ENCODE measurements at regions of chr7 and their contacts with region 1.

Region 1: GRCh38 chr7:103025341-103025740 is 49.3 kb downstream of the FBXL13 start:
- DNase-seq: peak in 2 of 4 experiments; percentile 58 to 68
- ATAC-seq: peak; percentile 88
- H3K4me3 ChIP-seq: no peak overlapping the region
- H3K27ac ChIP-seq: no peak overlapping the region; the same call in 2 of the 3 replicates
- H3K4me1 ChIP-seq: peaks cover 0 to 5% of the 10 kb centered on the region in 2 experiments; a peak in 2 of 5 replicates
- H3K27me3 ChIP-seq: no peaks in the 10 kb centered on the region
- CTCF ChIP-seq: no peak
- EP300 ChIP-seq: peak; percentile 85
- POLR2A ChIP-seq: no peak
- RAD21 ChIP-seq: 0 out of 4 replicates have a peak, but pooled peaks of 1 of the 2 experiments have one; percentile 19

Region 2: DNA sequence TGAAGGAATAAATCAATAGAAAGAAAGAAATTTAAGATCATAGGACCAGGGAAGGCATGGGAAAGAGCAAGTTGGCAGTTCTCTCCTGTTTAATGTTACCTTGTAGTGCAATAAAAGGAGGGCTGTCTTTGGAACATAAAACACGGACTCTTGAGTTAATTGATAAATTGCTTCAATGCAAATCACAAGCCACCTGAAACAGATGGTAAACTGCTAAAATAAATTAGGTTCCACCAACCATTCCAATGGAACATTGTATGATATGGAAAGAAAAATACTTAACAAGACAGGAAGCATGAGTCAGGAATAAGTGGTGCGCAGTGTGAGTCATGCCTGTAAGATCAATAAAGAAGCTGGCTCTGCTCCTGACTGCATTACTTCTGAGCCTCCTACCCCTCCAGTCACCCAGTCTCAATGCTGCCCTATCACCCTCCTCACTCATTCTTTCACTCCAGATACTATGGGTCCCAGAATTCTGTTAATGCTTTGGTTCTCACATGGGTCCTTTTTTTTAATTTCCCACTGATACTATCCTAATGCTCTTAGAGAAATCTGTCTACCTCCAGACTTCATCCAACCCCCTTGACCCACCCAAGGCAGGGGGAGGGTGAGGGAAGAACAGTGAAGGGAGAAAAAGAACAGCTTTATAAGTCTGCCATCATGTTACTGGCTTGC is 33.7 kb before region 1 on chr7:
- CTCF ChIA-PET with region 1: no interaction called
- POLR2A ChIA-PET with region 1: interaction called, 3 read pairs
- in situ Hi-C with region 1: no loop called
- intact Hi-C with region 1: loop called (anchors 5 kb)
- DNase-seq: peak; percentile 83 to 87 (median 84)
- ATAC-seq: peak; percentile 79
- H3K4me3 ChIP-seq: no peak overlapping the region
- H3K27ac ChIP-seq: peak overlapping the region; percentile 89
- H3K4me1 ChIP-seq: peaks cover 23 to 67% of the 10 kb centered on the region in 2 experiments
- H3K27me3 ChIP-seq: no peaks in the 10 kb centered on the region
- CTCF ChIP-seq: no peak
- EP300 ChIP-seq: peak; percentile 82
- POLR2A ChIP-seq: peak; percentile 70
- RAD21 ChIP-seq: 0 out of 4 replicates have a peak, but pooled peaks of 1 of the 2 experiments have one; percentile 23

Region 3: GRCh38 chr7:103037476-103037822 is 12.1 kb after region 1 on chr7:
- CTCF ChIA-PET with region 1: no interaction called
- POLR2A ChIA-PET with region 1: interaction called, 16 read pairs
- in situ Hi-C with region 1: no loop called
- intact Hi-C with region 1: no loop called
- DNase-seq: peak in 1 of 4 experiments; percentile 52
- ATAC-seq: peak; percentile 81
- H3K4me3 ChIP-seq: 0 out of 2 replicates have a peak overlapping the region, but pooled peaks have one; percentile 29
- H3K27ac ChIP-seq: peak overlapping the region; percentile 82
- H3K4me1 ChIP-seq: peaks cover 6 to 15% of the 10 kb centered on the region in 2 experiments; a peak in 4 of 5 replicates
- H3K27me3 ChIP-seq: no peaks in the 10 kb centered on the region
- CTCF ChIP-seq: no peak
- EP300 ChIP-seq: no peak
- POLR2A ChIP-seq: no peak
- RAD21 ChIP-seq: no peak

Region 4: GRCh38 chr7:103065667-103066066 is 40.3 kb after region 1 on chr7:
- CTCF ChIA-PET with region 1: no interaction called
- POLR2A ChIA-PET with region 1: no interaction called
- in situ Hi-C with region 1: no loop called
- intact Hi-C with region 1: no loop called
- DNase-seq: peak; percentile 34 to 69 (median 48)
- ATAC-seq: peak; percentile 82
- H3K4me3 ChIP-seq: no peak overlapping the region
- H3K27ac ChIP-seq: no peak overlapping the region
- H3K4me1 ChIP-seq: no peaks in the 10 kb centered on the region
- H3K27me3 ChIP-seq: no peaks in the 10 kb centered on the region
- CTCF ChIP-seq: peak; percentile 65 to 83 (median 71)
- EP300 ChIP-seq: no peak
- POLR2A ChIP-seq: no peak
- RAD21 ChIP-seq: peak; percentile 39 to 74; a peak in 3 of 4 replicates